Left ventricle myocardium superior (tissue), 1 donor: ENCODE measurements at regions of chr13 and their contacts with region 1.

Region 1: DNA sequence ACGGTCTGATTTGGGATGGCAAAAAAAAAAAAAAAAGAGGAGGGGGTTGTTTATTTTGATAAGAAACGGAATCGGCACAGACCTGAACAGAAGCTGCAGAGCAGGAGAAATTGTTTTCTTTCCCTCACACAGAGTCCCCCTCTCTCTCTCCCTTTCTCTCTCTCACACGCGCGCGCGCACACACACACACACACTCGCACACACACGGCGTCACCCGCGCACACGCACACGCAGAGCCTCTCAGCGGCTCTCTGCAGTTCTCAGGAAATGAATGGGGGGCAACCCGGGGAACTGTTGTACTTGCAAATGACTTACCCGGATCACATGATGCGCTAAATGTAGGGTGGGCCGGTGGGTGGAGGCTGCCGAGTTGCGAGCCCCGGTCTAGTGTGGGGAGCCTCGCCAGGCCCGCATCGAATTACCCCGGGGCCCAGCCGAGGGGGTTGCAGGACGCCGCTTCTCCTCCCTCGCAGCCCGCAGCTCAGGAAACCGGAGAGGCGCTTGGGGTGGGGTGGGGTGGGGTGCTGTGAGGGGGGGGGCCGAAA is 475 bp downstream of the KLF12 start:
- DNase-seq: peak; percentile 91
- ATAC-seq: peak; percentile 66

Region 2: DNA sequence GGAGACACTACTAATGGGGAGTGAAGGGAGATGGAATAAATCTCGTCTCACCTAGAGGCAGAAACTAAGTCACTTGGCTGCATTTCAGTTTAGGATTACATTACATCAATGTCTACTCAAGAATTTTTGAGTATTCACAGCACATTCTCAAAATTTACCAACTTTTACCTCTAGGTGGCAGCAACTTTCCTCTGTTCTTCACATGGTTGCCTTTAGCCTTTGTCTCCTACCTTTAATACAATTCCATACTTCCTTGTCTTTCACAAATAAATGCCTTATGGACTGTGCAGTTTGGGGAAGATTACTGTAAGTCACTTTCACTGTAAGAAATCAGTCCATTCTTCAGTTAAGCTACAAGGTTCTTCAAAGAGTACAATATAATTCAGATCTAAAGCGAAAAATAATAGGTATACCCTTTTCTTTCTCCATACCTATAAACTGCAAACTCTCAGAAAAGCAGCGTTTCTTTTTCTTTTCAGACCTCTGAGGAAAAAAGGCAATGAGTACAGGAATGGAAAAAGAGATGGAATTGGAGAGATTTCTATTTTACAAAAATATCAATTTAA is 378.9 kb before region 1 on chr13:
- intact Hi-C with region 1: loop called (anchors 10 kb)
- DNase-seq: no peak
- ATAC-seq: peak; percentile 56

Region 3: GRCh38 chr13:73835138-73835721 is 298.5 kb before region 1 on chr13:
- intact Hi-C with region 1: no loop called
- DNase-seq: no peak
- ATAC-seq: peak; percentile 60

Region 4: DNA sequence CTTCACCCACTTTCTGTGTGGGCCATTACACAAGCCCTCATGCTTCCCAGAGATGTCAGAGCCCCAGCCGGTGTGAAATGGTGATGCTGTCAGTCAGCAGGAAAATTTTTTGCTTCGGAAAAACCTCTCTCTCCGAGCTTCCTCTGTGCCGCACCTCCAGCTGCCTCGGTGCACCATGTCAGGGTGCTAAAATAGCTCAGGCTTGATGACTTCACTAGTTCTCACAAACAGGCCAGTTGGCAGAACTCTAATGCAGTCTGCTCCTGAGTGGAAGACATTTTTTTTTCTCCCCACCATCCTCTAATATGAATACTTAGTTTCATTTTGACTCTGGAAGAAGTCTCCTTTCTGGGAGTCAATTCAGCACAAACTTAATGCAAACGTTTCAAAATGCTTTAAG is 70.8 kb before region 1 on chr13:
- intact Hi-C with region 1: loop called (anchors 5 kb)
- DNase-seq: peak; percentile 72
- ATAC-seq: peak; percentile 98